ENCODE measurements at regions of chr2 and their contacts with region 1.

Region 1: DNA sequence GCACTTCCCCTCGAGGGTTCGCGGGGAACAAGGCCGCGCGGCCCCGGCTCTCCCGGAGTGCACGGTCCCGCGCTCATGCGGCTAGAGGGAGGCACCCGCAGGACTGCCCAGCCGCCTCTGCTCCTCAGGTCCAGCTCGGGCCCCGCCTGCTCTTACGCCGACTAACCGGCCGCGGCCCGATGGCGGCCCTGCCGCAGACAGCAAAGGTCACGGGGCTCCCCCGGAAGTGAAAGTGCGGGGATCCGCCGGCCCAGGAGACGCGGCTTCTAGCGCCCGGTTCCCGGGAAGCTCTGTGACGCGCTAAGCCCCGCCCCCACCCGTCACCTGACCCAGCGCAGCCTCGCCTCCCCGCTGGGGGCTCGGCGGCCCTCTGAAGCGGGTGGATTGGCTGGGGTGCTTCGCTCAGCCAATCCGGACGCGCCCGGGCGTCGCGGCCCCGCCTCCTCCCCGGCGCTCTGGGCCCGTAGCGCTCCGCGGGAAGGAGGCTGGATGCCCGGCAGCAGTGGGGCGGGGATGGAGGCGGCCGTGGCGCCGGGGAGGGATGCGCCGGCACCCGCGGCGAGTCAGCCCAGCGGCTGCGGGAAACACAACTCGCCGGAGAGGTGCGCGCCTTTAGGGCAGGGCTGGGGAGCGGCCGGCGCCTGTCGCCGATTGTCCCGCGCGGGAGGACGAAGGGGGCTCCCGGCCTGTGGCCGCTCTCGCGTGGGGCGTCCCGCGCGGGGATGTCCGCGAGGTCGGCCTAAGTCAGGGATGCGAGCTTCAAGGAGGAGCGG is at the start of gene SCLY:
- DNase-seq: peak; percentile 97
- ATAC-seq: peak; percentile 96 to 97
- H3K4me3 ChIP-seq: peak within 1 kb of the TSS; percentile 76 to 100 (median 94)
- H3K27ac ChIP-seq: peak within 1 kb of the TSS; percentile 86 to 98 (median 92)
- H3K4me1 ChIP-seq: peaks cover 13 to 26% of the 10 kb centered on the region in 2 donors
- H3K27me3 ChIP-seq: no peaks in the 10 kb centered on the region
- CTCF ChIP-seq: no peak
- POLR2A ChIP-seq: peak; percentile 90 to 91
- total RNA-seq, gene SCLY: 3.3 to 9.7 (median 5.6) TPM

Region 2: GRCh38 chr2:237923481-237924163 is 137.1 kb before region 1 on chr2:
- in situ Hi-C with region 1: no loop called
- intact Hi-C with region 1: loop called (anchors 5 kb)
- DNase-seq: peak; percentile 44 to 71
- ATAC-seq: peak; percentile 83 to 94
- H3K4me3 ChIP-seq: peak overlapping the region; percentile 27 to 54 (median 42)
- H3K27ac ChIP-seq: peak overlapping the region; percentile 36 to 67 (median 62)
- H3K4me1 ChIP-seq: peaks cover 4 to 16% of the 10 kb centered on the region in 2 donors
- H3K27me3 ChIP-seq: no peaks in the 10 kb centered on the region
- CTCF ChIP-seq: peak; percentile 94 to 99 (median 99)
- POLR2A ChIP-seq: no peak

Region 3: DNA sequence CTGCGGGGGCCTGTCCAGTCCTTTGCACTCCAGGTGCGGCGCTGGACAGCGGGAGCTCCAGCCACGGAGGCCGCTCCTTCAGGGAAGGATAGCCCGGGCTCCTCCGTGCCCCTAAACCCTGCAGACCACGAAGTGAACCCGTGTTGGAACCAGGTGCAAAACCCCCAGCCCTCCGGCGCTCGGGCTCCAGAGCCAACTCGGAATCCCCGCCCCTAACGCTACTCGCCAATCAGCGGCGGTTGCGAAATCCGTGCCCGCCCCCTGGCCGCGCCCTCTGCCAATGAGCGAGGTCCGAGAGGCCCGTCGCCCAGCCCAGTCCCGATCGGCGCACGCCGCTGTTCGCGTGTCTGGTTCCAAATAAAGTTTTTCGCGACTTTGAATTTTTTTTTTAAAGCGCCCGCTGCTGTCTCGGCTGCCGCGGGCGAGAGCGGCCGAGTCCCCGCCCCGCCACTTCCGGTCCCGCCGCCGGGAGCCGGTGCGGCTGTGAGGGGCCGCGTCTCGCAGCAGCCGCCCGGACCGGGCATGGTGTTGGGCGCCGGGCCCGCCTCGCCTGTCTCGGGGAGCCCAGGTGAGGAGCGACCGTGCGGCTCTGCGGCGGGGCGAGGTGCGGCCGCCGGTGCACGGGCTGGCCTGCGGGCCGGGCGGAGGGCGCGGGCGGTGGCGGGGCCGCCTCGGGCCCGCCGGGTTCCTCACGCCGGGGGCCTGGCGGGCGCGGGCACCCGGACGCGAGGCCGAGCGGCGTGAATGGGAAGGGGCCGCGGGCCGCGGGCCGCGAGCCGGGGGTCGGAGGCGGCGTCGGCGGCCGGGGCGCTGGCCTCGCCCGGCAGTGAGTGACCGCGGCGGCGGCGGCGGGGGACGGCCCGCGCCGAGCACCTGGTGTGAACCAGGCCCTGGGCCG is 93.9 kb before region 1 on chr2 and contains the start of gene UBE2F:
- in situ Hi-C with region 1: no loop called
- intact Hi-C with region 1: loop called (anchors 1 kb)
- DNase-seq: peak; percentile 95 to 96
- ATAC-seq: peak; percentile 96 to 97
- H3K4me3 ChIP-seq: peak within 1 kb of the TSS; percentile 80 to 90 (median 88)
- H3K27ac ChIP-seq: peak within 1 kb of the TSS; percentile 75 to 88 (median 84)
- H3K4me1 ChIP-seq: peaks cover 21 to 42% of the 10 kb centered on the region in 2 donors
- H3K27me3 ChIP-seq: no peaks in the 10 kb centered on the region
- CTCF ChIP-seq: no peak
- POLR2A ChIP-seq: peak; percentile 90 to 92
- total RNA-seq, gene UBE2F: 67.3 to 97.3 (median 81.2) TPM

Region 4: DNA sequence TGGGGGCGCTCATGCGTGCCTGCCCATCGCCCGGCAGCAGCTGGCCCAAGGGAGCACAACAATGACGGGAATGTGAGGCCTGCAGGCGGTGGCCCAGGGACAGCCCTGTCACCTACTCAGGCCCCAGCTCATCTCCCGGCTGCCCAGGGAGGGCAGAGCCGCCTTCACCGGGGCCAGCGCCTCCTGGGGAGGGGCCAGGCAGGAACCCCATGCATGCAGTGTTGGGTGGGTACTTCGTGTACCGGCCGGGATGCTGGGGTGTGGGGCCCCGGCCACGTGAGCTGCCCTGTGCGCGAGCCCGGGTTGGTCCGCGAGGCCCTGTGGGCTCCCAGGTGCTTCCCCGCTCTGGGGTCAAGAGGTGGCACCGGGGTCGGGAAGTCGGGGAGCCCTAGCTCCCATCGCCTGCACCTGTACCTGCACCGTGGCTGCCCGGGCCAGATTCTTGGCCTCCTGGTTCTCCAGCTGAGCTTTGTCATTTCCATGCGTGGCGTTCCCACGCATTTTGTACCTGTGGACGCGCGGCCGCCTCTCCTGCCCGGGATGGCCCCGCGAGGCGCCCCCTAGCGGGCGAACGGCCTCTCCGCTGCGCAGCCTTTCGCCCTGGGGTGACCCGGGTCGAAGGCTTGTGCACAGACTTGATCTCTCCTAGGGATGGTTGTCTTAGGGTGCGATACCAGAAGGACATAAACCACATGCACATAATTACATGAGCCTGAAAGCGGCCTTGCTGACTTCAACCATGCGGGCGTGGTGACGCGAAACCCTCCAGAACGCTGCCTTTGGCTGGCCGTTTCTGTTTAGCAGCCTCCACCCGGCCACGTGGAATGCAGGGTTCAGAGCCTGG is 78.7 kb after region 1 on chr2:
- in situ Hi-C with region 1: no loop called
- intact Hi-C with region 1: loop called (anchors 1 kb)
- DNase-seq: peak; percentile 38 to 65
- ATAC-seq: peak; percentile 3
- H3K4me3 ChIP-seq: peak overlapping the region; percentile 56 to 89 (median 80)
- H3K27ac ChIP-seq: peak overlapping the region; percentile 91 to 100 (median 98)
- H3K4me1 ChIP-seq: peaks cover 67 to 72% of the 10 kb centered on the region in 2 donors
- H3K27me3 ChIP-seq: no peaks in the 10 kb centered on the region
- CTCF ChIP-seq: peak; percentile 51 to 96 (median 89)
- POLR2A ChIP-seq: no peak

Region 5: GRCh38 chr2:238203094-238203972 is 142.6 kb after region 1 on chr2 and contains the start of gene ILKAP:
- in situ Hi-C with region 1: no loop called
- intact Hi-C with region 1: loop called (anchors 2 kb)
- DNase-seq: peak; percentile 81 to 87
- ATAC-seq: peak; percentile 95 to 96
- H3K4me3 ChIP-seq: peak within 1 kb of the TSS; percentile 56 to 85 (median 66)
- H3K27ac ChIP-seq: peak within 1 kb of the TSS; percentile 83 to 94 (median 91)
- H3K4me1 ChIP-seq: peaks cover 31 to 43% of the 10 kb centered on the region in 2 donors
- H3K27me3 ChIP-seq: no peaks in the 10 kb centered on the region
- CTCF ChIP-seq: peak in 1 of 5 experiments; percentile 24
- POLR2A ChIP-seq: peak; percentile 93 to 97
- total RNA-seq, gene ILKAP: 16.6 to 30.1 (median 23.3) TPM

Region 6: DNA sequence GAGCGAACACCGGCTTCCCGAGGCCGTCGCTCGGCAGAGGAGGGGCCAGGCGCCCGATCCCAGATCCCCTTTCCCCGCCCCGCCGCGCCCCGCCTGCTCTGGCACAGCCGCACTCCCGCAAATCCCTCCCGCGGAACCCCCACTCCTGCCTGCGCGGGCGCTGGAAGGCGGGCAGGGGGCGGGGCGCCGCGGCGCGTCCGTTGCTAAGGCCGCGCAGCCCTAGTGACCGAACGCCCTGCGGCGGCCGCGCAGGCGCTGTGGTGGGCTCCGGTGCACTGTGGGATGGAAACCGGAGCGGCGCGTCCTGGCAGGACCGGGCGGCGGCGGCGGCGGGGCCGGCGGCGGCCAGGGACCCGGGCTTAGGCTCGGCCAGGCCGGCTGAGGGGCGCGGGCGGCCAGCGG is 259.5 kb after region 1 on chr2 and contains the start of gene TRAF3IP1:
- in situ Hi-C with region 1: no loop called
- intact Hi-C with region 1: loop called (anchors 1 kb)
- DNase-seq: peak; percentile 83 to 91
- ATAC-seq: peak; percentile 80 to 81
- H3K4me3 ChIP-seq: peak within 1 kb of the TSS; percentile 65 to 74 (median 70)
- H3K27ac ChIP-seq: peak within 1 kb of the TSS; percentile 75 to 89 (median 81)
- H3K4me1 ChIP-seq: peaks cover 21 to 31% of the 10 kb centered on the region in 2 donors
- H3K27me3 ChIP-seq: no peaks in the 10 kb centered on the region
- CTCF ChIP-seq: no peak
- POLR2A ChIP-seq: peak; percentile 50 to 74
- total RNA-seq, gene TRAF3IP1: 8.5 to 20.8 (median 10.9) TPM